BJ (cell line): ENCODE measurements at regions of chr4 and their contacts with region 1.

Region 1: GRCh38 chr4:70613306-70614183 is 15.0 kb upstream of the ENAM start:
- DNase-seq: no peak
- H3K4me3 ChIP-seq: no peak overlapping the region
- H3K27me3 ChIP-seq: peaks cover 4% of the 10 kb centered on the region
- CTCF ChIP-seq: no peak

Region 2: DNA sequence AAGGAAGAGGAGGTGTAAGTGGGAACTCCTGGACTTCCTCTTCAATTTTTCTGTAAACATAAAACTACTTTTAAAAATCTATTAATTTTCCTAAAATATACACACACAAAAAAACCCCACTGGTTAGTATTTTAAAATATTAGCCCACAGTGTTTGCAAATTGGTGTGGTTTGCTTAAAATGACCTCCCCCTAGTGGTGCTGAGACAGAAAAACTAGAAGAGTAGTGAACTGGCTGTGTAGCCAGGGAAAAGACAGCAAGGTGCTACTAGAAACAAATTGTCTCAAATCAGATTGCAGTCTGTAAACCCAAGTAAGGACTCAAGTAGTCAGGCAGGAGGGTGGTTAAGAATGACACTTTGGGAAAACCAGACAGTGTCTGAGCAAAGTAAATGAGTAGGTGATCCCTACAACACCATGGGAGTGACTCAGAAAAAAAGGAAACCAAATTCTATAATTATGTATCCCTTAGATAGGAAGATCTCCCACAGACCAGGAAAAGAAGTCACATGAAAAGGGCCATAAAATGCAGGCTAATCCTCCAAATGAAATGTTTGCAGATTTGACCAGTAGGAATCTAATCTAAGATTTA is 69.2 kb before region 1 on chr4:
- CTCF ChIA-PET with region 1: no interaction called
- POLR2A ChIA-PET with region 1: no interaction called
- DNase-seq: no peak
- H3K4me3 ChIP-seq: no peak overlapping the region
- H3K27me3 ChIP-seq: no peaks in the 10 kb centered on the region
- CTCF ChIP-seq: peak; percentile 60

Region 3: GRCh38 chr4:70589785-70590184 is 23.8 kb before region 1 on chr4:
- CTCF ChIA-PET with region 1: no interaction called
- POLR2A ChIA-PET with region 1: no interaction called
- DNase-seq: no peak
- H3K4me3 ChIP-seq: no peak overlapping the region
- H3K27me3 ChIP-seq: no peaks in the 10 kb centered on the region; the same call in none of the 2 replicates
- CTCF ChIP-seq: no peak

Region 4: GRCh38 chr4:70601422-70602039 is 12.0 kb before region 1 on chr4:
- CTCF ChIA-PET with region 1: interaction called, 22 read pairs
- POLR2A ChIA-PET with region 1: no interaction called
- DNase-seq: no peak
- H3K4me3 ChIP-seq: no peak overlapping the region
- H3K27me3 ChIP-seq: 0 out of 2 replicates have a peak, but pooled peaks cover 3% of the 10 kb centered on the region
- CTCF ChIP-seq: peak; percentile 78

Region 5: DNA sequence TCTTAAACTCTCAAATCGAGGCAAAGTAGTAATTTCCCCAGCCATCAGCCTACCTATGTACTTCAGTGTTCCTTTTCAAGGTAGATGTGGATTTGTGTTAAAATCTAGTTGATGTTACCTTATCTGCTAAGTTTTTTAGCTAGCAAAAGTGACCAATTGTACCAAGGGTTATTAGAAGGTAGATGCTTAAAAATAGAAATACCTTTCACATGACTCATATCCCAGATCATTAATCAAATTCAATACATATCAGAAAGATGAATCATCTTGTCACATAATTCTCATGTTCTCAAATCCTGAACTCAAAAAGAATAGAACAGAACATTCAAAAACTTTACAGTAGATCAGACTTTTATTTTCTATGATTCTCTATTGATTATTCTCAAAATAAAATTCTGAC is 18.5 kb after region 1 on chr4:
- CTCF ChIA-PET with region 1: no interaction called
- POLR2A ChIA-PET with region 1: no interaction called
- DNase-seq: no peak
- H3K4me3 ChIP-seq: no peak overlapping the region
- H3K27me3 ChIP-seq: no peaks in the 10 kb centered on the region
- CTCF ChIP-seq: no peak